Activated CD4-positive, alpha-beta T cell treated with anti-CD3 and anti-CD28 coated beads, Interleukin-2, amount 10 ng/mL, durations not matched to agents 24 days and 14 days (primary cell): ENCODE measurements at regions of chr5 and their contacts with region 1.

Region 1: DNA sequence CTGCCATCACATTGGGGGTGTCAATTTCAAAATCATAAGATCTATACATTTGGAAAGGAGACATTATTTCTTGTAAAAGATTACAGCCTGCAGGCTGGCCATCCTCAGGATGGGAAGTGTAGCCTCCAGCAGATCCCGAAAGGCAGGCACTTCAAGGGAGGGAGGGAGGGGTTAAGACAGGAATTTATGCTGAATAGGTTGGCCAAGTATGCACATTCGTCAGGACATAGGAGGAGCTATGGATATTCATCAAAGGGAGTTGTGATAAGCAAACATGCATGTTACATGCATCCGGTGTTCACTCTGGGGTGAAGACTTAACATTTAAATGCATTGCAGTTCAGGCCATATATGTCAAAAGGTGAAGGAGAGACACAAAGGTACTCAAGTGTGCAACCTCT is 119.4 kb downstream of the CEP120 start:
- DNase-seq: no peak
- H3K4me3 Mint-ChIP-seq: no peak overlapping the region
- H3K27ac Mint-ChIP-seq: no peak overlapping the region
- H3K4me1 Mint-ChIP-seq: no peaks in the 10 kb centered on the region
- H3K27me3 Mint-ChIP-seq: peaks cover 8% of the 10 kb centered on the region

Region 2: GRCh38 chr5:123089914-123090670 is 213.7 kb before region 1 on chr5:
- intact Hi-C with region 1: no loop called
- DNase-seq: peak; percentile 53
- H3K4me3 Mint-ChIP-seq: no peak overlapping the region
- H3K27ac Mint-ChIP-seq: no peak overlapping the region
- H3K4me1 Mint-ChIP-seq: peaks cover 7% of the 10 kb centered on the region
- H3K27me3 Mint-ChIP-seq: peaks cover 74% of the 10 kb centered on the region

Region 3: DNA sequence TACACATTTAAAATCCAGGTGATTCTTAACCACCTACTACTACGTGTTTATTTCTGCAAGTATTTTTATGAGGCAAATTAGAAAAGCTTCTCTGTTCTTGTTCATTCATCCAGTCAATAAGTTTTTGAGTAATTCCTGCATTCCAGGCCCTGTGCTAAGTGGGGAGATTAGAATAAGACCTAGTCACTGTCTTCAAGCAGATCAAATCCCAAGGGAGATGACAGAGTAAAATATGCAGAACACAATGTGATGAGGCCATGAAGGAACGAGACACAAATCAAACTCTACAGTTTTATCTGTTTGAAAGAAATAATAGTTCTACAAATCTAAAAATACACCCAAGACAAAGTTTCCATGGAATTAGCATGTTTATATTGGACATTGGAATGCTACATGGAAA is 39.4 kb before region 1 on chr5:
- intact Hi-C with region 1: loop called (anchors 1 kb)
- DNase-seq: no peak
- H3K4me3 Mint-ChIP-seq: no peak overlapping the region
- H3K27ac Mint-ChIP-seq: no peak overlapping the region
- H3K4me1 Mint-ChIP-seq: no peaks in the 10 kb centered on the region
- H3K27me3 Mint-ChIP-seq: no peaks in the 10 kb centered on the region

Region 4: GRCh38 chr5:124034963-124035362 is 731.2 kb after region 1 on chr5:
- intact Hi-C with region 1: no loop called
- DNase-seq: no peak
- H3K4me3 Mint-ChIP-seq: no peak overlapping the region
- H3K27ac Mint-ChIP-seq: no peak overlapping the region
- H3K4me1 Mint-ChIP-seq: no peaks in the 10 kb centered on the region
- H3K27me3 Mint-ChIP-seq: no peaks in the 10 kb centered on the region